ENCODE measurements at regions of chr14 and their contacts with region 1.

Region 1: GRCh38 chr14:52695481-52696091 is at the start of gene ERO1A:
- DNase-seq: peak; percentile 26 to 83 (median 53)
- ATAC-seq: peak; percentile 82
- H3K4me3 ChIP-seq: peak within 1 kb of the TSS; percentile 79
- H3K4me3 Mint-ChIP-seq: peak within 1 kb of the TSS; percentile 95 to 99 (median 99)
- H3K27ac ChIP-seq: peak within 1 kb of the TSS; percentile 85
- H3K27ac Mint-ChIP-seq: peak within 1 kb of the TSS; percentile 94 to 99 (median 98)
- H3K4me1 ChIP-seq: peaks cover 26 to 27% of the 10 kb centered on the region in 2 donors
- H3K4me1 Mint-ChIP-seq: peaks cover 32 to 47% (median 42%) of the 10 kb centered on the region in 7 donors
- H3K27me3 ChIP-seq: no peaks in the 10 kb centered on the region
- H3K27me3 Mint-ChIP-seq: no peaks in the 10 kb centered on the region
- total RNA-seq, gene ERO1A: 65.3 to 201 (median 68.7) TPM

Region 2: DNA sequence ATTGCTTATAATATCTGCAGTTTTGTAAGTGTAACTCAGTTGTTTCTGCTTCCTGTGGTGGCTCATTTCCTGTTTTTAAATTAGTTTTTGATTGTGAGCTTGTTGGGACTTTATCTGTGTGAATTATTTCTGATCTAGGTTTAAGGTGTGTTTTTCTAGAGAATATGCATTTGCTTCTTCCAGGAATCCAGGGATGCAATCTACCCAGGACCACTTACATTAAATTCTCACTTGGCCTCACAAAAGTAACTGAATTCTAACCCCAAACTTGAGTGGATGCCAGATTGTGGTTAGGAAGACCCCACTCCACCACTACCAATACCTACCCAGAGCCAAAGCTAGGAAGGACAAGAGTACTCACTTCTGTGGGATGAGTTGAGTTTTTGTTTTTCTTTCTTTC is 46.3 kb after region 1 on chr14:
- CTCF ChIA-PET with region 1: no interaction called
- POLR2A ChIA-PET with region 1: interaction called, 8 read pairs
- intact Hi-C with region 1: loop called in 1 of 2 experiments (anchors 1 kb)
- DNase-seq: peak in 7 of 9 donors; percentile 13 to 52 (median 40)
- ATAC-seq: peak; percentile 60
- H3K4me3 ChIP-seq: peak overlapping the region; percentile 54
- H3K4me3 Mint-ChIP-seq: peak overlapping the region; percentile 75 to 93 (median 84)
- H3K27ac ChIP-seq: peak overlapping the region; percentile 68
- H3K27ac Mint-ChIP-seq: peak overlapping the region; percentile 92 to 100 (median 96)
- H3K4me1 ChIP-seq: peaks cover 48 to 64% of the 10 kb centered on the region in 2 donors
- H3K4me1 Mint-ChIP-seq: peaks cover 42 to 90% (median 74%) of the 10 kb centered on the region in 7 donors
- H3K27me3 ChIP-seq: no peaks in the 10 kb centered on the region
- H3K27me3 Mint-ChIP-seq: no peaks in the 10 kb centered on the region